A673 (cell line): ENCODE measurements at regions of chr7 and their contacts with region 1.

Region 1: DNA sequence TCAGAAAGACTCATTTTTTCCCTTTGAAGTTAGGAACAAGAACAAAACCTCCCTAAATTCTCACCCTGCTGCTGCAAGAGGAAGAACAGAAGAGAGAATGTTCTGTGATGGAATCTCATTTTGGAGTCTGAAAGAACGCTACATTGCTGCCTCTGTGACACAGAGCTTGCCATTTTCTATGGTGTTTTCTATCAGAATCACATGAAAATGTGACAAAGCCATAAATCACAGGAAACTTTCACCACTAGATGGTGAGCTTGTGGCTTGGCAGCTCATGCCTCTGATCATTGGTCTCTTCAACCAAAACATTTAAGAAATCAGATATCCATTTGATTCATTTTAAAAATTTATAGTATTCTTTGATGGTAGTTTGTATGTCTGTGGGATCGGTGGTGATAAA is 82.9 kb downstream of the CADPS2 start:
- DNase-seq: peak; percentile 86
- H3K4me3 ChIP-seq: no peak overlapping the region
- H3K27ac ChIP-seq: peak overlapping the region; percentile 72
- H3K4me1 ChIP-seq: peaks cover 54% of the 10 kb centered on the region
- H3K27me3 ChIP-seq: no peaks in the 10 kb centered on the region
- CTCF ChIP-seq: peak; percentile 70

Region 2: GRCh38 chr7:122397381-122397780 is 405.9 kb before region 1 on chr7:
- CTCF ChIA-PET with region 1: no interaction called
- POLR2A ChIA-PET with region 1: no interaction called
- intact Hi-C with region 1: no loop called
- DNase-seq: no peak
- H3K4me3 ChIP-seq: no peak overlapping the region
- H3K27ac ChIP-seq: no peak overlapping the region
- H3K4me1 ChIP-seq: peaks cover 4% of the 10 kb centered on the region
- H3K27me3 ChIP-seq: no peaks in the 10 kb centered on the region
- CTCF ChIP-seq: no peak

Region 3: GRCh38 chr7:122770686-122771335 is 32.5 kb before region 1 on chr7:
- CTCF ChIA-PET with region 1: no interaction called
- POLR2A ChIA-PET with region 1: interaction called, 14 read pairs
- intact Hi-C with region 1: no loop called
- DNase-seq: peak; percentile 86
- H3K4me3 ChIP-seq: no peak overlapping the region
- H3K27ac ChIP-seq: no peak overlapping the region
- H3K4me1 ChIP-seq: peaks cover 55% of the 10 kb centered on the region
- H3K27me3 ChIP-seq: no peaks in the 10 kb centered on the region
- CTCF ChIP-seq: no peak

Region 4: GRCh38 chr7:122886357-122887081 is 83.2 kb after region 1 on chr7 and contains the start of gene CADPS2:
- CTCF ChIA-PET with region 1: no interaction called
- POLR2A ChIA-PET with region 1: no interaction called
- intact Hi-C with region 1: loop called (anchors 5 kb)
- DNase-seq: peak; percentile 96
- H3K4me3 ChIP-seq: peak within 1 kb of the TSS; percentile 91
- H3K27ac ChIP-seq: peak within 1 kb of the TSS; percentile 93
- H3K4me1 ChIP-seq: peaks cover 22% of the 10 kb centered on the region
- H3K27me3 ChIP-seq: no peaks in the 10 kb centered on the region
- CTCF ChIP-seq: no peak; the same call in 1 of the 2 replicates
- total RNA-seq, gene CADPS2: 74.4 and 81.3 TPM in 2 replicates

Region 5: DNA sequence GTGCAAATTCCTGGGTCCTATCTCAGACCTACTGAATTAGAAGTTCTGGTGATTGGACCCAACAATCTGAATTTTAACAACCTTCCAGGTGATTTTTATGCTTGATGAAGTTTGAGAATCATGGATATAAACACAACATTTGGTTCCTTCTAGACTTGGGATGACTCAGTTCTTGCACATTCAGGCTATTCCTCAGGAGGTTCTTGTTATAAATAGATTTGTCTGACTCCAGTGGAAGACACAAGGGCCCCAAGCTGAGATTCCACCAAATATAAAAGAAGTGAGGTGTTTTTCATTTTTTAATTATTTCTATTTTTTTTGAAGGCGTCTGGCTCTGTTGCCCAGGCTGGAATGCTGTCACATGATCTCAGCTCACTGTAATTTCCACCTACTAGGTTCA is 201.6 kb after region 1 on chr7:
- CTCF ChIA-PET with region 1: no interaction called
- POLR2A ChIA-PET with region 1: no interaction called
- intact Hi-C with region 1: no loop called
- DNase-seq: no peak
- H3K4me3 ChIP-seq: no peak overlapping the region
- H3K27ac ChIP-seq: no peak overlapping the region
- H3K4me1 ChIP-seq: no peaks in the 10 kb centered on the region
- H3K27me3 ChIP-seq: no peaks in the 10 kb centered on the region
- CTCF ChIP-seq: no peak